HCT116 (cell line): ENCODE measurements at regions of chr7 and their contacts with region 1.

Region 1: DNA sequence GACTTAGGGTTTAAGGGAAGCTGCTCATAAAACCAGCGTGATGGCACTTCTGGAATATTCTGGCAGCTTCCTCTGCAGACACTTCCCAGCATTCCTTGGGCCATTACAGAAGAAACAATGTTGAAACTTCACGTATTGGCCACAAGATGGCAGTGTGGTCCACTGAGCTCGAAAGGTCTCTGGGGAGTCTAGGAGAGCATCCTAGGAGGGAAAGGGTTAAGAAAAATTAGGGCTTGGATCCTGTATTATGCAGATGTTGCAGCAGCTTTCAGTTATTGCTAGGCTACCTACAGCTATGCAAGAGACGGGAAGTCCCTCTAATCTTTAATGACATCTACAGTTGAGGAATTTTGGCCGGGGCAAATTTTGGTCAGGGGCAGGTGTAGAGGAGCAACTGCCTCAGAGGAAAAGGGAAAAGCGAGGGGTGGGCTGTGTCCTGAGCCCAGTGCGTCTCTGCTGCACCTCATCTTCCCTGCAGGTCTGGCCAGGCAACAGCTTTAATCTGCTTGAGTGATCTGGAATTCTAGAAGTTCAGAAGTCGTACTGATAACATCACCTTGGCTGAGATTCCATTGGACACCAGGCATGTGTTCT is 220.7 kb upstream of the PRSS58 start:
- DNase-seq: peak; percentile 48
- ATAC-seq: peak; percentile 87
- H3K4me3 ChIP-seq: no peak overlapping the region
- H3K27ac ChIP-seq: no peak overlapping the region
- H3K4me1 ChIP-seq: peaks cover 0 to 4% of the 10 kb centered on the region in 2 experiments; a peak in 2 of 4 replicates
- H3K27me3 ChIP-seq: no peaks in the 10 kb centered on the region
- CTCF ChIP-seq: peak; percentile 69 to 78 (median 78)
- POLR2A ChIP-seq: no peak
- RAD21 ChIP-seq: peak; percentile 61

Region 2: DNA sequence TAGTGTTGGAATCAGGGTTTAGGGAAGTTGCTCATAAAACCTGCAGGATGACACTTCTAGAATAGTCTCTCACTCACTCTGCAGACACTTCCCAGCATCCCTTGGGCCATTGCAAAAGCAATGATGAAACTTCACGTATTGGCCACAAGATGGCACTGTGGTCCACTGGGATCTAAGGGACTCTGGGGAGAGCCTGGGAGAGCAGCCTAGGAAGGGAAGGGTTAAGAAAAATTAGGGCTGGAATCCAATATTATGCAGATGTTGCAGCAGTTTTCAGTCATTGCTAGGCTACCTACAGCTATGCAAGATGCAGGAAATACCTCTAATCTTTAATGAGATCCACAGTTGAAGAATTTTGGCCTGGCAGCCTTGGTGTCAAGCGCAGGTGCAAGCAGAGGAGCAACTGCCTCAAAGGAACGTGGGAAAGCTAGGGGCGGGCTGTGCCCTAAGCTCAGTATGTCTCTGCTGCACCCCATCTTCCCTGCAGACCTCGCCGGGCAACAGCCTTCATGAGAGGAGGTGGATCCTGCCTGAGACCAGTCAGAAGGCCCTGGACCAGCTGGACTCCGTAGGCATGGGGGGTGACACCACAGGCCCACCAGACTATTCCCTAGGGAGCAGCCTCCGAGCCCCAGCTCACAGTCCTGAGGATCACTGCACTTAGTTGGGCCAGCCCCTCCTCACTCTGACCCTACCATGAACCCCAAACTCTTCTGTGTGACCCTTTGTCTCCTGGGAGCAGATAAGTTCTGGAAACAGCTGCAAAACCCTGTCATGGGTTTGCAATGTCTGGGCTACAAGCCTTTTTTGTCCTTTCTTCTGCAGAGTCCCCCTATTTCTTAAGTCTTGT is 92.9 kb before region 1 on chr7:
- CTCF ChIA-PET with region 1: interaction called, 3 read pairs
- POLR2A ChIA-PET with region 1: no interaction called
- RAD21 ChIA-PET with region 1: no interaction called
- intact Hi-C with region 1: loop called (anchors 5 kb)
- DNase-seq: peak; percentile 72
- ATAC-seq: peak; percentile 96
- H3K4me3 ChIP-seq: no peak overlapping the region
- H3K27ac ChIP-seq: no peak overlapping the region
- H3K4me1 ChIP-seq: peaks cover 0 to 13% of the 10 kb centered on the region in 2 experiments; a peak in 1 of 4 replicates
- H3K27me3 ChIP-seq: no peaks in the 10 kb centered on the region
- CTCF ChIP-seq: peak; percentile 66 to 88 (median 85)
- POLR2A ChIP-seq: no peak
- RAD21 ChIP-seq: peak; percentile 55; the same call in 1 of the 2 replicates

Region 3: GRCh38 chr7:142459551-142459963 is 19.0 kb before region 1 on chr7:
- CTCF ChIA-PET with region 1: interaction called, 29 read pairs
- POLR2A ChIA-PET with region 1: interaction called, 3 read pairs
- RAD21 ChIA-PET with region 1: interaction called in 1 of 2 experiments, 3 read pairs
- intact Hi-C with region 1: no loop called
- DNase-seq: peak; percentile 41
- ATAC-seq: peak; percentile 97
- H3K4me3 ChIP-seq: no peak overlapping the region
- H3K27ac ChIP-seq: no peak overlapping the region
- H3K4me1 ChIP-seq: peaks cover 0 to 10% of the 10 kb centered on the region in 2 experiments; a peak in 2 of 4 replicates
- H3K27me3 ChIP-seq: no peaks in the 10 kb centered on the region
- CTCF ChIP-seq: peak; percentile 70 to 85 (median 77)
- POLR2A ChIP-seq: no peak
- RAD21 ChIP-seq: peak; percentile 71